ENCODE measurements at regions of chr6 and their contacts with region 1.

Region 1: DNA sequence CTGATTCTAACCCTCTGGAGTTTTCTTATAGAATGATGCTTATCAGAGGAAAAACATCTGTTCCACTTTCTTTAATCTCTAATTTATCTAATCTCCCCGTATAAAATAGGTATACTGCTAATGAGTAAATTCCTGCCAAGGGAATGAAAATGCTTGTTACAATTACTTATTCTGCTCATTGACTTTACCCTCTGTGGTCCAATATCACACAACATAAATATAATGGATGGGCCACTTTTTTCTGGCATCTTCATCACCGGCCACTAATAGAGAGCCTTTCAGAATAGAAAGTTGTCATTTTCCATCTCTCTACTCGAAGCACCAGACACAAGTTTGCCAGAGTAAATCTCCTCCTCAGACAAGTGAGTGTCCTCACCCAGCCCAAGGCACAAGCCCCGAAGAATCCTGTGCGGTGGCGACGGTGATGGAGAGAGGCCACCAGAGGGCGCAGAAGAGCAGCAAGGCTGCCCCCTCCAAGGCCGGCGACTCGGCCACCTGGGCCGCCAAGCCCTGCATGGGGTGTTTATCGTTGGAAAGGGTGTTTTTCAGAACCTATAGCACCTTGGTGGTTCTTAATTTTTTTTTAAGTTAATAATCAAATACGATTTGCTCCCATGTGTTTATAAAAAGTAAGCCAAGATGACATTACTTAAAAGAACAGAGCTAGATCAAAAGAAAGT is 212.9 kb upstream of the ARID1B start:
- DNase-seq: peak; percentile 89
- H3K4me3 ChIP-seq: peak overlapping the region; percentile 25
- H3K27ac ChIP-seq: peak overlapping the region; percentile 57
- H3K4me1 ChIP-seq: peaks cover 23% of the 10 kb centered on the region
- CTCF ChIP-seq: peak; percentile 100

Region 2: GRCh38 chr6:156279261-156279969 is 284.9 kb before region 1 on chr6:
- CTCF ChIA-PET with region 1: no interaction called
- POLR2A ChIA-PET with region 1: interaction called, 4 read pairs
- intact Hi-C with region 1: loop called (anchors 5 kb)
- DNase-seq: peak; percentile 98
- H3K4me3 ChIP-seq: peak overlapping the region; percentile 61
- H3K27ac ChIP-seq: peak overlapping the region; percentile 96
- H3K4me1 ChIP-seq: peaks cover 61% of the 10 kb centered on the region
- CTCF ChIP-seq: no peak

Region 3: DNA sequence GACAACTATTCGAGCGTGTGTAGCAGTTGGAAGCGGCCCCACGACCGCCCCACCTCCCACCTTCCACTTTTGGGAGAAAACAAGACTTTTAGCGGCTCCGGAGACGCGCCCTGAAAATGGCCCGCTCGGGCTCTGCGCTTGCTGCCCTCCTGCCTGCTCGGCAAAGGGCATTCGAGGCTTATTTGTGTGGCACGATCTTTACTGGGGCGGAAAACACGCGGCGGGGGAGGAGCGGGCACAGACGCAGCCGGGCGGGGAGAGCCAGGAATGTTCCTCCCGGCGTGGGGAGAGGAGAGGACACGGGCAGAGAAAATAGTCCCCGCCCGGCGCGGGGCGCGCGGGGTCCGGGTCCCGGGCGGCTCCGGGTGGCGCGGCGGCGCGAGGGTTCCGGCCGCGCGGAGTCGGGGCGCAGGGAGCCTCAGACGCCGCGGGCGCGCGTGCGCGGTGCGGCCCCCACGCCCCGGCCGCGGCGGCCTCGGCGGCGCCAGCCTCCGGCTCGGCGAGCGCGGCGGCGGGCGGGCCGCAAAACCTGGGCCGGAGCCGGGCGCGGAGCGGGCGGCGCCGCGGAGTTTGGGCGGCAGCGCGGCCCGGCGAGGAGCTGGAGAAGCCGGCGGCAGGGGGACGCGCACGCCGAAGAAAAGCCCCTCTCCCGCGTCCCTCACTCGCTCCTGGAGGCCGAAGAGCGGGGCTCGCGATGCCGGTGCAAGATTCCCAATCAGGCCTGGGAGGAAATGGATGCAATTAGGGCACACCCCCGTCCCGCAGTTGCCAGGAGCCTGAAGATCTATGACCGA is 122.9 kb after region 1 on chr6:
- CTCF ChIA-PET with region 1: no interaction called
- POLR2A ChIA-PET with region 1: interaction called, 4 read pairs
- intact Hi-C with region 1: loop called (anchors 1 kb)
- DNase-seq: peak; percentile 89
- H3K4me3 ChIP-seq: peak overlapping the region; percentile 73
- H3K27ac ChIP-seq: peak overlapping the region; percentile 92
- H3K4me1 ChIP-seq: peaks cover 57% of the 10 kb centered on the region
- CTCF ChIP-seq: no peak

Region 4: GRCh38 chr6:156852132-156852857 is 288.0 kb after region 1 on chr6:
- CTCF ChIA-PET with region 1: no interaction called
- POLR2A ChIA-PET with region 1: no interaction called
- intact Hi-C with region 1: loop called (anchors 10 kb)
- DNase-seq: peak; percentile 90
- H3K4me3 ChIP-seq: peak overlapping the region; percentile 43
- H3K27ac ChIP-seq: peak overlapping the region; percentile 67
- H3K4me1 ChIP-seq: peaks cover 83% of the 10 kb centered on the region
- CTCF ChIP-seq: no peak

Region 5: DNA sequence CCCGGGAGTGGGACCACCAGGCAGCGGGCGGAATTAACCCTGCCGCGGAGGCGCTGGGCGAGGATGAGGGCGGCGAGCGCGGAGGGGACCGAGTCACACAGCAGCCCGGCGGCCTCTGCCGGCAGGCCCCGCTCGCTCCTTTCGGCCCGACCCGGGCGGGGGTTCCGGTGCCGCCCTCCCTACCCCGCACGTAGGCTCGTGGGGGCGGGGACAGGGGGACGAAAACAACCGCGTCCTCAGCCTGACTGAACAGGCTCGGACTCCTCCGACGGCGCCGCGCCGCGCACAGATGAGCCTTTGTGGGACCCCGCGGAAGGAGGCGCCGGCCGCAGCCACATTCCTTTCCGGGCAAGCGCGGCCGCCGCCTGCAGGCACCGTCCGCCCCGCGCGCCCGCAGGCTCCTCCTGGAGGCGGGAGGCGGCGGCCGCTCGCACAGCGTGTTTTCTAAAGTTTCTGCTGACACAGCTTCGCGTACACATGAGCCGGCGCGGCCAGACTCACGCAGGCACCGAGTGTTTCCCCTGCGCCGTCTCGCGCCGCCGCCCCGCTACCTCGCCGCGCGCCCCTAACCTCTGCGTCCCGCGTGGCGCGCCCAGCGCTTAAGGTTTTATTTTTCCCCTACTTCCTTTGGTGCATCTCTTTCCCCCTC is 457.2 kb after region 1 on chr6:
- CTCF ChIA-PET with region 1: no interaction called
- POLR2A ChIA-PET with region 1: interaction called, 3 read pairs
- intact Hi-C with region 1: loop called (anchors 5 kb)
- DNase-seq: peak; percentile 93
- H3K4me3 ChIP-seq: peak overlapping the region; percentile 73
- H3K27ac ChIP-seq: peak overlapping the region; percentile 89
- H3K4me1 ChIP-seq: peaks cover 38% of the 10 kb centered on the region
- CTCF ChIP-seq: peak; percentile 38

Region 6: GRCh38 chr6:157274471-157275226 is 710.4 kb after region 1 on chr6:
- CTCF ChIA-PET with region 1: no interaction called
- POLR2A ChIA-PET with region 1: no interaction called
- intact Hi-C with region 1: loop called (anchors 1 kb)
- DNase-seq: peak; percentile 86
- H3K4me3 ChIP-seq: peak overlapping the region; percentile 67
- H3K27ac ChIP-seq: peak overlapping the region; percentile 34
- H3K4me1 ChIP-seq: peaks cover 23% of the 10 kb centered on the region
- CTCF ChIP-seq: peak; percentile 70

Measured in OCI-LY7 (cell line).